MCF 10A (cell line): ENCODE measurements at regions of chr1 and their contacts with region 1.

Region 1: DNA sequence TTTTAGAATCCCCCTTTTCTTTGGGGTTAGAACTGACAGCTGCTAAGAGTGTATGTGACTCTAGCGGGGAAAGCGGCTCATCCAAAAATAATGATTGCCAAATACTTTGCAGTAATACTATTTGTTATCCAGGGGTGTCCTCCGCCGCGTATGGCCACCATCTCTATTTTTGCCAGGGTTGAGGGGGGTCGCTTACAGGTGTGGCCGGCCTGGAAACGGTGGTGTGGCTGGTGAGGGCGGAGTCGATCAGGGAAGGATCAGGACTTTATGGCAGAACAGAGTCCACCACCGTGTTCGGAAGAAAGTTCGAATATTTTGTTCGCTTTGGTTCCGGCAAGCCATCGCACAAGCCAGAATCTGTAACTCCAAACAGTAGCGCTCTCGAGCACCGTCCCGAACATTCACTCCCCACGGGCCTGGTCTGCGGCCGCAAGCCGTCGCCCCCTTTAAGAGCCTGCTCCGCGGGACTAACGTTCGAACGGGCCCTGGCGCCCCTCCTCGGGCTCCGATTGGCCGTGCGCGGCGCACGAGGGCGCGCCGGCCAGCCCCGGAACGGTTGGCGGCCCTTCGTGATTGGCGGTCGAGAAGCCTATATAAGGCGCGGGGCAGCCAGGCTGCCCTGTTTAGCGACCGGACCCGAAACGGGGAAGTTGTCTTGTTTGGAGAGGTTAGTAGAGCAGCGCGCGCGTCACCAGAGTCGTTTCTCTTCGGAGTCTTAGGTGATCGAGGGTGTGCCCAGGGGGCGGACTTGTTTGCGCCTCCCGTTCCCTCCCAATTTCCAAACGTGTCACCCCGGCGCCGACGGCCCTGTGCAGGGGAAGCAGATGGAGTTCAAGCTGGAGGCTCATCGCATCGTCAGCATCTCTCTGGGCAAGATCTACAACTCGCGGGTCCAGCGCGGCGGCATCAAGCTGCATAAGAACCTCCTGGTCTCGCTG is at the start of gene IER5:
- DNase-seq: peak; percentile 99
- H3K4me3 Mint-ChIP-seq: peak within 1 kb of the TSS; percentile 100
- H3K27ac Mint-ChIP-seq: peak within 1 kb of the TSS; percentile 99
- H3K4me1 Mint-ChIP-seq: peaks cover 43% of the 10 kb centered on the region
- H3K27me3 Mint-ChIP-seq: no peaks in the 10 kb centered on the region
- CTCF ChIP-seq: no peak
- total RNA-seq, gene IER5: 47.5 and 49.5 TPM in 2 replicates

Region 2: GRCh38 chr1:180881806-180882509 is 206.4 kb before region 1 on chr1:
- CTCF ChIA-PET with region 1: interaction called, 4 read pairs
- POLR2A ChIA-PET with region 1: interaction called, 5 read pairs
- intact Hi-C with region 1: loop called (anchors 1 kb)
- DNase-seq: peak; percentile 60
- H3K4me3 Mint-ChIP-seq: no peak overlapping the region
- H3K27ac Mint-ChIP-seq: peak overlapping the region; percentile 44
- H3K4me1 Mint-ChIP-seq: peaks cover 14% of the 10 kb centered on the region
- H3K27me3 Mint-ChIP-seq: no peaks in the 10 kb centered on the region
- CTCF ChIP-seq: peak; percentile 67

Region 3: GRCh38 chr1:180898441-180899219 is 189.7 kb before region 1 on chr1:
- CTCF ChIA-PET with region 1: no interaction called
- POLR2A ChIA-PET with region 1: no interaction called
- intact Hi-C with region 1: no loop called
- DNase-seq: no peak
- H3K4me3 Mint-ChIP-seq: no peak overlapping the region
- H3K27ac Mint-ChIP-seq: no peak overlapping the region
- H3K4me1 Mint-ChIP-seq: no peaks in the 10 kb centered on the region
- H3K27me3 Mint-ChIP-seq: no peaks in the 10 kb centered on the region
- CTCF ChIP-seq: no peak

Region 4: DNA sequence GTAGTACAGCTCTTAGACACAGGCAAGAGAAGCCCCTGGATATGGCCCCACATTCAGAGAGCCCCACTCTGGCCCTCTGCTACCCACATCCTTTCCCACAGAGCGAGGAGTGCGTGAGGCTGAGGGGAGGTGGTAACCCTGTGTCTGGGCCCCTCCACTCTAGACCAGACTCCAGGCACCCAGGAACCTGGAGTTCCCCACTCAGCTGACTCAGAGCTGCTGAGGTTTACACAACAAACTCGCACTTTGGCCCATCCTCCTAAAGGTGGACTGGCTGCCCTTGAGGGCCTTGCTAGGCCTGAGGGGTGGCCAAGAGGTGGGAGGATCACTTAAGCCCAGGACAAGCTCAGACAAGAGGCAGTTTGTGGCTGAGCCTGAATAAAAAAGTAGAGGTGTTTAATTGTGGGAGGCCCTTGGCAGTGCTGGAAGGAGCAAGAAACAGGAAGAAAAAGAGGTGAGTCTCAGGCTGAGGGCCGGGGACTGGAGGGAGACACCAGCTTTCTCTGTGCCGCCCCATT is 43.8 kb before region 1 on chr1:
- CTCF ChIA-PET with region 1: interaction called, 12 read pairs
- POLR2A ChIA-PET with region 1: interaction called, 309 read pairs
- intact Hi-C with region 1: no loop called
- DNase-seq: peak; percentile 99
- H3K4me3 Mint-ChIP-seq: peak overlapping the region; percentile 58
- H3K27ac Mint-ChIP-seq: peak overlapping the region; percentile 88
- H3K4me1 Mint-ChIP-seq: peaks cover 41% of the 10 kb centered on the region
- H3K27me3 Mint-ChIP-seq: no peaks in the 10 kb centered on the region
- CTCF ChIP-seq: no peak

Region 5: GRCh38 chr1:181105134-181106021 is 17.0 kb after region 1 on chr1:
- CTCF ChIA-PET with region 1: interaction called, 27 read pairs
- POLR2A ChIA-PET with region 1: interaction called, 1,371 read pairs
- intact Hi-C with region 1: loop called (anchors 1 kb)
- DNase-seq: peak; percentile 95
- H3K4me3 Mint-ChIP-seq: peak overlapping the region; percentile 65
- H3K27ac Mint-ChIP-seq: peak overlapping the region; percentile 22
- H3K4me1 Mint-ChIP-seq: peaks cover 61% of the 10 kb centered on the region
- H3K27me3 Mint-ChIP-seq: no peaks in the 10 kb centered on the region
- CTCF ChIP-seq: no peak

Region 6: DNA sequence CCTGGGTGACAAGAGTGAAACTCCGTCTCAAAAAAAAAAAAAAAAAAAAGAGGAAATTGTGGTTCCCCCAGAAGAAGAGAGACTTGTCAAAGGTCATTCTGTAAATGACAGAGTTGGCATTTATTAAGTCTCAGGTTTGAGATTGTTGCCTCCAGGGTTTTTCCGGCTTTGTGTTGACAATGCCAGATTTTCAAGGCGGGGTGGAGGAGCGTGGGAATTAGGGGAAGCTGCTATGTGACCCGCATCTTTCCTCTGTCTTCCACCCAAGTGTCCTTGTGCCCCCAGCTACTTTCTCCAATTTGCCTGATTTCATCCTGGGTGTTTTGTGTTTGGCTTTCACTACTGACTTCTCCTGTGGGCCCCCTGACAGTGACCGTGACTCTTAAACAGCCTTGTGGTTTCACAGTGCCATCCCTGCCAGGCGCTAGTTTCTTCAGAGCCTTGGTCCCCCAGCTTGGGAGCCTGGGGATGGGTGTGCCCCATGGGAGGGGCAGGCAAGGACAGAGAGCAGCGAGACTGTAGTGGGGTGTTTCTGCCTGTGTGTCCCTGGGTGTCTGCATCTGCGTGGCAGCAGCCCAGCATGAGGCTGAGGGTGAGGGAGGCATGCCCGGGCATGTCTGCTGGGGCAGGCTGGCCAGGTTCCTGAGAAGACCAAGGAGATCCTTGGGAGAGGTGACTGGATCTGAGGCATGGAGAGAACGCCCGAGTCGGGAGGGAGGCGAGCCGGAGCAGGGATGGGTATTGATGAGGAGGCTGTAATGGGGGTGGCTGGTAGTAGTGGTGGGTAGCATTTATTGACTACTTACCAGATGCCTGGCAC is 46.4 kb after region 1 on chr1:
- CTCF ChIA-PET with region 1: interaction called, 215 read pairs
- POLR2A ChIA-PET with region 1: interaction called, 1,402 read pairs
- intact Hi-C with region 1: loop called (anchors 1 kb)
- DNase-seq: peak; percentile 96
- H3K4me3 Mint-ChIP-seq: peak overlapping the region; percentile 71
- H3K27ac Mint-ChIP-seq: peak overlapping the region; percentile 100
- H3K4me1 Mint-ChIP-seq: peaks cover 53% of the 10 kb centered on the region
- H3K27me3 Mint-ChIP-seq: no peaks in the 10 kb centered on the region
- CTCF ChIP-seq: no peak

Region 7: GRCh38 chr1:181424786-181425403 is 336.5 kb after region 1 on chr1:
- CTCF ChIA-PET with region 1: interaction called, 3 read pairs
- POLR2A ChIA-PET with region 1: no interaction called
- intact Hi-C with region 1: loop called (anchors 1 kb)
- DNase-seq: peak; percentile 84
- H3K4me3 Mint-ChIP-seq: peak overlapping the region; percentile 56
- H3K27ac Mint-ChIP-seq: no peak overlapping the region
- H3K4me1 Mint-ChIP-seq: peaks cover 8% of the 10 kb centered on the region
- H3K27me3 Mint-ChIP-seq: peaks cover 38% of the 10 kb centered on the region
- CTCF ChIP-seq: peak; percentile 100